Mucosa of descending colon (tissue), 3 donors: ENCODE measurements at regions of chr16 and their contacts with region 1.

Region 1: GRCh38 chr16:75385507-75386152 is 47.7 kb downstream of the CFDP1 start:
- DNase-seq: peak in 1 of 3 donors; percentile 31
- ATAC-seq: peak; percentile 75
- H3K4me3 ChIP-seq: no peak overlapping the region
- H3K4me1 ChIP-seq: no peaks in the 10 kb centered on the region
- CTCF ChIP-seq: peak; percentile 12

Region 2: DNA sequence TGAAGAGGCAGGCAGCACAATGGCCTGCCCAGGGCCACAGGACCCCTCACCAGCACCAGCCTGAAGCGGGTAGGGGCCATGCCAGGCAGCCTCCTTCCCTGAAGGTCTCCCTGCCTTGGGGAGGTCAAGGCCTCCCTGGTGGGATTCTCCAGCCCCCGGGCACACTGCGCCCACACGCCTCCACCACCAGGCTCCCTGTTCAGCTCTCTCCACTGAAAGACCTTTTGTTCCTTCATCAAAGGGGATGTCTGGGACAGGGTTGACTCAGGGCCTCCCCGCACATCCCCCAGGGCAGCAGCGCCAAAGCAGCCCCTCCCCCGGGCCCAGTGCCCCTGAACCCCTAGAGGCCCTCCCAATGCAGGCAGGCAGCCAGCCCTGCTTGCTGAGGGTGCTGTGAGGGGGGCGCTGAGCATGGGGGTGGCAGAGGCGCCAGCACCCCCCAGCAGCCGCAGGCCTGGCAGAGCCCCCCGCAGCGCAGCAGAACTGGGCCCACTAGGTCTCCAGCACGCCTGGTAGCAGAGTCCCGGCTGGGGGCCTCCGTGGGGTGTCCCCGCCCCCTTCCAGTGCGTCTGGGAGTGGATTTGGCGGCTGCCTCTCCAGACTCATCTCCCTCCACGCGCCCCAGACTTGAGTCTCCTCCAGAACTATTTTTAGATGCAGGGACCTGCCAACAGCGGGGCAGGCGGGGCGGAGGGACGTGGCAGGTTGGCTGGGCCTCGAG is 147.3 kb before region 1 on chr16:
- intact Hi-C with region 1: loop called in 1 of 2 experiments (anchors 10 kb)
- DNase-seq: peak in 2 of 3 donors; percentile 58 to 64
- ATAC-seq: no peak
- H3K4me3 ChIP-seq: no peak overlapping the region
- H3K4me1 ChIP-seq: no peaks in the 10 kb centered on the region
- CTCF ChIP-seq: no peak